Calu3 (cell line): ENCODE measurements at regions of chr1 and their contacts with region 1.

Region 1: DNA sequence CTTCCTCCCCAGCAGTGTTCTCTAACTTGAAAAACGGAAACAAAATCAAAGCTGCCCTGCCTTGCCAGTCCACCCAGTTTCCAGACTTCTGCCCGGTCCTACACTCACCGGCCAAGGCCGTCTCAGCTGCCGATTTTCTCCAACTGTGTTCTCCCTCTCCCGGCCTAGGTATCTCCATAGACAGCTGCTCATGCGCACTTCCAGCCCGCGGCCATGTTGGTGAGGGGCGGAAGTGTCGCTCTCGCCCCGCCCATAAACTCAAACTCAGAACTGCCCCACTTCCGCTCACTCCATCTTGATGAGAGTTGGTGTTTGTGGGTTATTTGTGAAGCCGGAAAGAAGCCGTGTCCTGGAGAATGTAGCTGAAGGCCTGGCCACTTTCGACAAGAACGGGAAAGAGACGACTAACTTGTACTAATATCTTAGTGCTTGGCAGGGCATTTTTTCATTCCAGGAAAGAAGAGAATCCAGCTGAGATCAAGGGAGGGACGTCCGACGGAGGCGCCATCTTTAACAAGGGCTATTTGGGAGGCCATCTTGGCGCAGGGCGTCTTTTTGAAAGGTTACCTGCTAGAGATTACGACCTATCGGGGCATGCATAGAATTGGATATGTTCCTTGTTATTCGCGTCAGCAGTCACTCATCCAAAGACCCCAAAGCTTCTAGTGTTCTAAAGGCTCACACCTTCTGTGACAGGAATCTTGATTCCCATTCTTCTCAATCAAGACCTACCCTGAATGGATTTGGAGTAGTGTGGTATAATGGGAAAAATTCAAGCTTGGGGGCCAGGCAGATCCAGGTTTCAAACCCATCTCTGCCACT is at the start of gene USF1:
- DNase-seq: peak; percentile 94
- H3K4me3 Mint-ChIP-seq: peak within 1 kb of the TSS; percentile 88
- H3K27ac Mint-ChIP-seq: peak within 1 kb of the TSS; percentile 95
- H3K4me1 Mint-ChIP-seq: no peaks in the 10 kb centered on the region
- H3K27me3 Mint-ChIP-seq: no peaks in the 10 kb centered on the region
- CTCF ChIP-seq: no peak
- total RNA-seq, gene USF1: 72.1 and 75.4 TPM in 2 replicates

Region 2: DNA sequence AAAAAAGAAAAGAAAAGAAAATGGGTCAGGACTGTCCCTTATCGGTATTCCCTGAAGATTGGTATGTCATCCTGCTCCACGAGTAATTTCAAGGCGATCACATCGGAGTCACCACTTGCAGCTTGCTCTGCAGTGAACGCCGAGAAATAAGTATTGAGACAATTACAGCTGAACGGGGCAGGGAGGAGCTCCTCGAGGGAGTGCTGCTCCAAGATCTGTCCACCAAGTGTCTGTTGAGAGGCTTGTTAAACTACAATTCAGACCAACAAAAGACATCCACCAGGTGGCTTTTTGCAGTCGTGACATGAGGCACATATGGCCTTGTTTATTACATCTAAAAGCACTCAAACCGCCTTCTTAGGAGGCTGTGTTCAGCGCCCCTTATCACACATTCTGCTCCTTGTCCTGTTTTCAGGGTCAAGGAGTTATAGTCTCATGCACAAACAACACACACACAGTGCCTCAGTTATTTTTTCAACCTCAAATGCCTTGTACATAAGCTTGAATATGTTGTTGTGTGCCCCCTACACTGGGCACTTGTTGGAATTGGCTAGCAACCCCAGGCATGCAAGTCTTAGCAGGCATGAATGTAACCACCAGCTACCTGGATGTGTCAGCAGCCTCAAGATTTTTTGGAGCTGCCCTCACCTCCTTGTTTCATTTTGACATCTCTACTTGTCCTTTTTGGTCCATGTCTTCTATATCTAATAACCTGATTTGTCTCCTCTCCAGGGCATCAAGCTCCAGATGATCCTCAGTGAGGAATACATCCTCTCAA is 321.3 kb before region 1 on chr1:
- CTCF ChIA-PET with region 1: no interaction called
- intact Hi-C with region 1: no loop called
- DNase-seq: no peak
- H3K4me3 Mint-ChIP-seq: no peak overlapping the region
- H3K27ac Mint-ChIP-seq: no peak overlapping the region
- H3K4me1 Mint-ChIP-seq: no peaks in the 10 kb centered on the region
- H3K27me3 Mint-ChIP-seq: peaks cover 22% of the 10 kb centered on the region
- CTCF ChIP-seq: no peak

Region 3: DNA sequence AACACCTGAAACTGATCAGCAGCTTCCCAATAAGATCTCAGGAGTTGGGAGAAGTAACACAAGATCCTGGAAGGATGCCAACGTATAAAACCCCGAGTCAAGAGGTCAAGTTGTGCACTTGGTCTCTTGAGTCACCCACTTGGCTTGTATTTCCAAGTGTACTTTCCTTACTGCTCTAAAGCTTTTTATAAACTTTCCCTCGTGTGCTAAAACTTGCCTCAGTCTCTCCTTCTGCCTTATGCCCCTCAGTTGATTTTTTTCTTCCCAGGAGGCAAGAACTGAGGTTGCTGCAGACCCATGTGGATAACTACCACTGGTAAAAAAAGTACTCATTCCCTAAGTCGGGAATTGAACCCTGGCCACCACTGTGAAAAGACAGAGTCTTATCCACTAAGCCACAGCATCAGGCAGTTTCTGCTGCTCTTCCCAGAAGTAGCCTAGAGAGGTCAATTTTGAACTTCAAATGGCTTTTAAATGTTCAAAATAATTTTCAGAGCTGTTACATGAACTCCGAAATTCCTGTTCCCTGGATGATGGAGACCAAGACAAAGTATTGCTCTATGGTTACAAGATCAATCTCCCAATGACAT is 120.2 kb before region 1 on chr1:
- CTCF ChIA-PET with region 1: no interaction called
- intact Hi-C with region 1: no loop called
- DNase-seq: no peak
- H3K4me3 Mint-ChIP-seq: peak overlapping the region; percentile 2
- H3K27ac Mint-ChIP-seq: peak overlapping the region; percentile 32
- H3K4me1 Mint-ChIP-seq: peaks cover 16% of the 10 kb centered on the region
- H3K27me3 Mint-ChIP-seq: peaks cover 24% of the 10 kb centered on the region
- CTCF ChIP-seq: no peak

Region 4: DNA sequence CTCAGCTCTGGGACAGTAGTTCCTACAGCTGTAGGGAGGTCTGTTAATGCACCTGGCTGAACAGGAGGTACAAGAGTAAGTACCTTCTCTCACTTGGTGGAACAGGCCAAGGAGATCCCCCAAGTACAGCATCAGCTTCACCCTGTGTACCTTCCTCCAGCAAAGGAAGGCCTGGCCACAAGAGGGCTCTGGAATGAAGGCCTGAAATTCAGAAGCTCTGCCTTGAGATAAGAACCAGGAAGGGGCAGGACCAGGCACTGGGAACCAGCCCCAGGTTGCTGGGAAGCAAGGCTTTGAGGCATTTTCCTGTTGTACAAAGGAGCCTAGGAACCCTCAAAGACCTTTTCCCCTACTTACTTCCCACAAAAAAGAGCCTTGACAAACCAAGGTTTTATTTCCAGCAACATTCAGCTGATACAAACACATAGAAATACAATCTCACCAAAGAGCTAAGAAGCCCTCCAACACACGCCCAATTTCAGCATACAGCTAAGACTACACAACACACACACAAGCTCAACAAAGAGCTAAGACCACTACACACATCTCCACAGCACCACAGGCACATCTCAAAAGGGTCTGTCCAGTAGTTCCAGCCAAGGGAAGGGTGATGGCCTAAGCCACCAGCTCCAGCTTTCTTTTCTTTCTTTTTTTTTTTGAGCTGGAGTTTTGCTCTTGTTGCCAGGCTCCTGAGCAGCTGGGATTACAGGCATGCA is 48.5 kb before region 1 on chr1:
- CTCF ChIA-PET with region 1: interaction called, 6 read pairs
- intact Hi-C with region 1: loop called (anchors 5 kb)
- DNase-seq: peak; percentile 80
- H3K4me3 Mint-ChIP-seq: peak overlapping the region; percentile 2
- H3K27ac Mint-ChIP-seq: peak overlapping the region; percentile 71
- H3K4me1 Mint-ChIP-seq: peaks cover 56% of the 10 kb centered on the region
- H3K27me3 Mint-ChIP-seq: no peaks in the 10 kb centered on the region
- CTCF ChIP-seq: peak; percentile 68

Region 5: DNA sequence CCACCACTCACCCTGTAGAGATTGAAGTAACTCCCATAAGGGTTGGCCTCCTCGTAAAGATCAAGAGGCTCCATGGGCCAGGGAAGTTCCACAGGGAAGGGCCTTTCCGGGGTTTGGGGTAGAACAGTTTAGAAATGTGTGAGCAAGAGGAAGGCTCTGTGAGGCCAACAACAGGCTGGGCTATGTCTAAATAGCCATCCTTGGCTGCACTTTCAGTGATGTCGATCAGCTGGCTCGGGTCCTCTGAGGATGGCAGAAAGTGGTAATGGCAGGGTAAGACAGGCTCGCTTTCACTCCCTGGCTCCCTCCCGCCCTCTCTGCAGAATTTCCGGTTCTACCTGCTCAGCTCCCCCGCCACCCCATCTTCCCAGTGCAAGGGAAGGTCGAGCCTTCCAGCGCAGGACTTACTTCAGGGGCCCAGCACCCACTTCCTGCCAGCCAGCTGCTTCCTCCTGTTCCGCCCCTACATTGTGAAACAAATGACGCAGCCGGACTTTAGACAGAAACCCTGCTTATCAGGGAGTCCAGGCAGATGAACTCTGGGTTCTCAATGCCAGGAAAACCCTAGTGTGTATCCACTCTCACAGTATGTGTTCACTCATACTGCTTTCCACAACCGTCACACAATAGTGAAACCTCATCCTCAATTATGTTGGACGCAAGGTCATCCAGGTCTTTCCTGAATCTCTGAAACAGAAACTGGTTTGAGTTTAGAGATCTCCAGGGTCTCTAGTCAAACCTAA is 32.3 kb before region 1 on chr1:
- CTCF ChIA-PET with region 1: interaction called, 4 read pairs
- intact Hi-C with region 1: loop called (anchors 2 kb)
- DNase-seq: peak; percentile 94
- H3K4me3 Mint-ChIP-seq: peak overlapping the region; percentile 44
- H3K27ac Mint-ChIP-seq: peak overlapping the region; percentile 95
- H3K4me1 Mint-ChIP-seq: peaks cover 60% of the 10 kb centered on the region
- H3K27me3 Mint-ChIP-seq: no peaks in the 10 kb centered on the region
- CTCF ChIP-seq: no peak

Region 6: GRCh38 chr1:161021165-161021960 is 24.6 kb before region 1 on chr1:
- CTCF ChIA-PET with region 1: interaction called, 10 read pairs
- intact Hi-C with region 1: no loop called
- DNase-seq: peak; percentile 99
- H3K4me3 Mint-ChIP-seq: peak overlapping the region; percentile 91
- H3K27ac Mint-ChIP-seq: peak overlapping the region; percentile 94
- H3K4me1 Mint-ChIP-seq: peaks cover 58% of the 10 kb centered on the region
- H3K27me3 Mint-ChIP-seq: no peaks in the 10 kb centered on the region
- CTCF ChIP-seq: no peak

Region 7: GRCh38 chr1:161082991-161083742 is 37.2 kb after region 1 on chr1:
- CTCF ChIA-PET with region 1: interaction called, 4 read pairs
- intact Hi-C with region 1: loop called (anchors 5 kb)
- DNase-seq: peak; percentile 99
- H3K4me3 Mint-ChIP-seq: peak overlapping the region; percentile 77
- H3K27ac Mint-ChIP-seq: peak overlapping the region; percentile 25
- H3K4me1 Mint-ChIP-seq: peaks cover 85% of the 10 kb centered on the region
- H3K27me3 Mint-ChIP-seq: no peaks in the 10 kb centered on the region
- CTCF ChIP-seq: no peak

Region 8: GRCh38 chr1:161258439-161259344 is 212.7 kb after region 1 on chr1 and contains the start of gene PCP4L1:
- CTCF ChIA-PET with region 1: no interaction called
- intact Hi-C with region 1: no loop called
- DNase-seq: peak; percentile 75
- H3K4me3 Mint-ChIP-seq: peak within 1 kb of the TSS; percentile 68
- H3K27ac Mint-ChIP-seq: peak within 1 kb of the TSS; percentile 14
- H3K4me1 Mint-ChIP-seq: peaks cover 34% of the 10 kb centered on the region
- H3K27me3 Mint-ChIP-seq: peaks cover 60% of the 10 kb centered on the region
- CTCF ChIP-seq: no peak
- total RNA-seq, gene PCP4L1: not detected in 2 replicates

Region 9: DNA sequence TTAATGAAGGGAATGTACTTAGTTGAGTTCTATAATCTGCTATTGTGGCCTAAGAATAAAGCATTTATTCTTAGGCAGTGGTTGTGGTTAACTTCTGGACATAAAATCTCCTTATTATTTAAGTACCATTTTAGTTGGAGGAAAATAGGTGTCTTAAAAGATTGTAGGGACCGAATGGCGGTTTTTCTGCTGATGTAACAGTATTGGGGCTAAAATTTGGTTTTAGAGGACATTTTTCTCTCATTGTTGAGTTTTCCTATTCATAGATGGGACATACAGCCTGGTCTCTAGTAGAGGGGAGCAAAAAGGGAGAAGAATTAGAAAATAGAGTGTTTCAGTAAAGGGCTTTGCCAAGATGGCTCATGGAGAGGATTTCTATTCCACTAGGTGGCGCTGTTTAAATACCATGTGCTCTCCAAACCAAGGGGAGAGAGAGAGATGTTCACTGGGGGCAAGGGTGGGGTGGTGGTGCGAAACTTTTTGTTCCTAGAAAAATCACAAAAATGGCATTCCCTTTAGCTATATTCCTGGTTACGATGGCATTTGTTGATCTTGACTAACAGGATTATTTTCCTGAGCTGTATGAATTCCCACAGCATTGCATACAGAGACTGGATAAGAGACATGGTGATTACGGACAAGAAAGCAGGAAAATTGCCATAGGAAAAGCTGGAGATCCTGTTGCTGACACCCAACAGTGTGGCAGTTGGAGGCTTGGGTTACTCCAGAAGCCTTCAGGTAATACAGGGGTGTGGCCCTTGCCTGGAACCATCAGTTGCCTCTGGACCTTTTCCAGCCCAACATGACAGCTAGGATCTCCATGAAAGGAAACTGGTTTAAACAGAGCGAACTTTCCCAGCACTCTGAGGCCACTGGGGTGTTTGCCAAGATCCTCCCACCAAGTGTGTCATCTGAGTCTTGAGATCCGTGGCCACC is 441.1 kb after region 1 on chr1:
- CTCF ChIA-PET with region 1: no interaction called
- intact Hi-C with region 1: no loop called
- DNase-seq: peak; percentile 58
- H3K4me3 Mint-ChIP-seq: no peak overlapping the region
- H3K27ac Mint-ChIP-seq: no peak overlapping the region
- H3K4me1 Mint-ChIP-seq: no peaks in the 10 kb centered on the region
- H3K27me3 Mint-ChIP-seq: peaks cover 60% of the 10 kb centered on the region
- CTCF ChIP-seq: peak; percentile 88